Transverse colon (tissue), 4 donors: ENCODE measurements at regions of chr9 and their contacts with region 1.

Region 1: GRCh38 chr9:22307013-22307711 is 139.5 kb upstream of the DMRTA1 start:
- DNase-seq: no peak
- H3K4me3 ChIP-seq: no peak overlapping the region
- H3K27ac ChIP-seq: no peak overlapping the region
- H3K4me1 ChIP-seq: no peaks in the 10 kb centered on the region
- H3K27me3 ChIP-seq: no peaks in the 10 kb centered on the region
- CTCF ChIP-seq: peak; percentile 34 to 49 (median 48)
- EP300 ChIP-seq: no peak
- POLR2A ChIP-seq: no peak

Region 2: DNA sequence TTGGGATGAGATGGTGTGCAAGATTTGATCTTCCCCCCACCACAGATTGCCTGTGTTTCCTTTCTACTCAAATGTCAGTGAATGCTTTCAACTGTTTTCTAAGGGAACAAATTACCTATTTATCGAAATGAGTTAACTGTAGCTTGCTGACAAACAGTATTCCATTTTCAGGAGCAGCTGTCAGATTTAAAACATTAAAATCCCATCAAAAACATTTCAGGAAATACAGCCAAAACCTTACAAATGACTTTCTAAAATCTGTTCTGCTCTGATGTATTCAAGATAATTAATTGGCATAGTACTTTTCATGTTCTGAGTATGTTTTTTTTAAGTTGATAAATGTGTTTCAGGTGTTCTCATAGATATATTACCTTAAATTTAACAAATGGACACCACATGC is 18.5 kb before region 1 on chr9:
- in situ Hi-C with region 1: no loop called
- intact Hi-C with region 1: loop called (anchors 1 kb)
- DNase-seq: no peak
- H3K4me3 ChIP-seq: no peak overlapping the region
- H3K27ac ChIP-seq: no peak overlapping the region
- H3K4me1 ChIP-seq: no peaks in the 10 kb centered on the region
- H3K27me3 ChIP-seq: no peaks in the 10 kb centered on the region
- CTCF ChIP-seq: no peak
- EP300 ChIP-seq: no peak
- POLR2A ChIP-seq: no peak

Region 3: GRCh38 chr9:22452415-22453010 is 145.4 kb after region 1 on chr9:
- in situ Hi-C with region 1: loop called in 2 of 4 experiments (anchors 10 kb)
- intact Hi-C with region 1: loop called (anchors 10 kb)
- DNase-seq: peak; percentile 54
- H3K4me3 ChIP-seq: no peak overlapping the region
- H3K27ac ChIP-seq: no peak overlapping the region
- H3K4me1 ChIP-seq: peaks cover 0 to 12% (median 2%) of the 10 kb centered on the region in 4 donors
- H3K27me3 ChIP-seq: peaks cover 4% of the 10 kb centered on the region
- CTCF ChIP-seq: peak; percentile 72 to 85 (median 82)
- EP300 ChIP-seq: no peak
- POLR2A ChIP-seq: no peak